ENCODE measurements at regions of chr13 and their contacts with region 1.

Region 1: DNA sequence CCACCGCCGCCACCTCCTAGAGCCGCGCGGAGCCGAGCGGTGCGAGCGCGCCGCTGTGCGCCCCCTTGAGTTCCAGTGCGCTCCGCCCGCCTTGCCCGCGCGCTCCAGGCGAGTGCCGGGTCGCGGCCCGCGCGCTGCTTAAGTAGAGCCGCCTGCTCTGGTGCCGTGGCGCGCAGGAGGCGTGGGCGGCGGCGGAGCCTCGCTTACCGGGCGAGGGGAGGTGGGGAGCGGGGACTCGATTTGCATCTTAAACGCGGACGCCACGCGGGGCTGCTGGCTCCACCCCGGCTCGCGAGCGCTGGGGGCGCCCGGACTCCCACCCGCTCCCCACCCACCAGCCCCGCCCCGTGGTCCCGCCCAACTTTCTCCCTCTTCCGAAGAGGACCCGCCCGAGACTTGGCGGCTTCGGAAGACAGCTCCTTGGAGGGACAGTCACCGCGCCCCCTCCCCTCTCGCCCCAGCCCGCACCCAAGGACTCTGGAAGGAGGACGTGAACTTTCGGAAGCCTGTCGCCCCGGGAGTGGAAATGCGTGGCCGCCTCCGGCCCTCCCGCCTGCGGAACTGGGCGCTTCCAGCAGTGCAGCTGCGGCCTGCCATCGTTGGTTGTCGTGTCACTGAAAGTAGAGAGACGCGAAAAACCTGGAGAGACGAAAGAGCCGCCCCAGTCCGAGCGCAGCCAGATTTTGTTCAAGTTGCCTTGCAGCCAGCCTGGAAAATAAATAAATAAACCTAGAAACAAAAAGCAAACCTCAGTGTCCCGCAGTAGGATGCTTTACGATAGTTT is at the start of gene KCTD12:
- DNase-seq: peak; percentile 77 to 86 (median 83)
- H3K4me3 ChIP-seq: peak within 1 kb of the TSS; percentile 91 to 97 (median 96)
- H3K4me3 Mint-ChIP-seq: peak within 1 kb of the TSS; percentile 98 to 99
- H3K27ac ChIP-seq: peak within 1 kb of the TSS; percentile 96
- H3K27ac Mint-ChIP-seq: peak within 1 kb of the TSS; percentile 96 to 99 (median 97)
- H3K4me1 ChIP-seq: peaks cover 13 to 19% of the 10 kb centered on the region in 2 donors
- H3K4me1 Mint-ChIP-seq: peaks cover 28% of the 10 kb centered on the region
- H3K27me3 ChIP-seq: peaks cover 0 to 5% of the 10 kb centered on the region in 2 donors
- H3K27me3 Mint-ChIP-seq: peaks cover 8 to 11% (median 10%) of the 10 kb centered on the region in 3 donors
- CTCF ChIP-seq: peak; percentile 17
- polyA plus RNA-seq, gene KCTD12: 30.9 to 67.1 (median 31.2) TPM

Region 2: GRCh38 chr13:76667551-76667950 is 218.9 kb before region 1 on chr13:
- intact Hi-C with region 1: loop called in 1 of 2 experiments (anchors 10 kb)
- DNase-seq: peak; percentile 41 to 70 (median 52)
- H3K4me3 ChIP-seq: no peak overlapping the region
- H3K4me3 Mint-ChIP-seq: no peak overlapping the region
- H3K27ac ChIP-seq: no peak overlapping the region
- H3K27ac Mint-ChIP-seq: peak overlapping the region in 3 of 7 donors; percentile 24 to 41 (median 25)
- H3K4me1 ChIP-seq: peaks cover 20 to 28% of the 10 kb centered on the region in 2 donors
- H3K4me1 Mint-ChIP-seq: peaks cover 42% of the 10 kb centered on the region
- H3K27me3 ChIP-seq: no peaks in the 10 kb centered on the region
- H3K27me3 Mint-ChIP-seq: peaks cover 0 to under 1% (median 0%) of the 10 kb centered on the region in 3 donors
- CTCF ChIP-seq: peak; percentile 52

Region 3: DNA sequence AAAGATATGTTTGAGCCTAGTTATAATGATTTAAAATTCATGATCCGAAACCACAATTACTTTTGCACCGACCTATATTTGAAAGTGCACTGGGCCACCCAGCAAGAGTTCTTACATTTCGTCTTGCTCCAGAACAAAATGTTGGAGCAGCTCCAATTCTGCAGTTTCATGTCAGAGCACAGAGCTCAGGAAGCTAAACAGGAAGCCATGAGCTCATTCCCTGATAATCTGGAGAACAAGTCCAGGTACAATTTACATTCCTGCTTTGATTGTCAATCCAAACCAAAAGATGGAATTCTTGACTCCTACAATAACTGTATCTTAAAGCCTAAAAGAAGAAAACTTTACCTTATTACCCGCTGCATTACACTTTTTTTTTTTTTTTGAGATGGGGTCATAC is 132.1 kb before region 1 on chr13:
- intact Hi-C with region 1: loop called (anchors 5 to 10 kb)
- DNase-seq: no peak
- H3K4me3 ChIP-seq: no peak overlapping the region
- H3K4me3 Mint-ChIP-seq: no peak overlapping the region
- H3K27ac ChIP-seq: no peak overlapping the region
- H3K27ac Mint-ChIP-seq: no peak overlapping the region
- H3K4me1 ChIP-seq: peaks cover 53 to 56% of the 10 kb centered on the region in 2 donors
- H3K4me1 Mint-ChIP-seq: peaks cover 30% of the 10 kb centered on the region
- H3K27me3 ChIP-seq: no peaks in the 10 kb centered on the region
- H3K27me3 Mint-ChIP-seq: no peaks in the 10 kb centered on the region
- CTCF ChIP-seq: no peak

Region 4: GRCh38 chr13:76852986-76853385 is 33.5 kb before region 1 on chr13:
- intact Hi-C with region 1: loop called in 1 of 2 experiments (anchors 5 kb)
- DNase-seq: no peak
- H3K4me3 ChIP-seq: no peak overlapping the region
- H3K4me3 Mint-ChIP-seq: no peak overlapping the region
- H3K27ac ChIP-seq: no peak overlapping the region
- H3K27ac Mint-ChIP-seq: no peak overlapping the region
- H3K4me1 ChIP-seq: peaks cover 13 to 22% of the 10 kb centered on the region in 2 donors
- H3K4me1 Mint-ChIP-seq: peaks cover 30% of the 10 kb centered on the region
- H3K27me3 ChIP-seq: no peaks in the 10 kb centered on the region
- H3K27me3 Mint-ChIP-seq: no peaks in the 10 kb centered on the region
- CTCF ChIP-seq: no peak

Region 5: GRCh38 chr13:76991796-76992547 is 105.5 kb after region 1 on chr13 and contains the start of gene CLN5:
- intact Hi-C with region 1: loop called (anchors 5 kb)
- DNase-seq: peak; percentile 95 to 96 (median 96)
- H3K4me3 ChIP-seq: peak within 1 kb of the TSS; percentile 69 to 83 (median 78)
- H3K4me3 Mint-ChIP-seq: peak within 1 kb of the TSS; percentile 96 to 99
- H3K27ac ChIP-seq: peak within 1 kb of the TSS; percentile 79 to 93
- H3K27ac Mint-ChIP-seq: peak within 1 kb of the TSS; percentile 93 to 99 (median 96)
- H3K4me1 ChIP-seq: peaks cover 14 to 17% of the 10 kb centered on the region in 2 donors
- H3K4me1 Mint-ChIP-seq: peaks cover 28% of the 10 kb centered on the region
- H3K27me3 ChIP-seq: no peaks in the 10 kb centered on the region
- H3K27me3 Mint-ChIP-seq: peaks cover 0 to 7% (median 3%) of the 10 kb centered on the region in 3 donors
- CTCF ChIP-seq: no peak
- polyA plus RNA-seq, gene CLN5: 9.8 to 22.1 (median 21.5) TPM

Measured in CD14-positive monocyte (primary cell).